ENCODE measurements at regions of chr1 and their contacts with region 1.

Region 1: DNA sequence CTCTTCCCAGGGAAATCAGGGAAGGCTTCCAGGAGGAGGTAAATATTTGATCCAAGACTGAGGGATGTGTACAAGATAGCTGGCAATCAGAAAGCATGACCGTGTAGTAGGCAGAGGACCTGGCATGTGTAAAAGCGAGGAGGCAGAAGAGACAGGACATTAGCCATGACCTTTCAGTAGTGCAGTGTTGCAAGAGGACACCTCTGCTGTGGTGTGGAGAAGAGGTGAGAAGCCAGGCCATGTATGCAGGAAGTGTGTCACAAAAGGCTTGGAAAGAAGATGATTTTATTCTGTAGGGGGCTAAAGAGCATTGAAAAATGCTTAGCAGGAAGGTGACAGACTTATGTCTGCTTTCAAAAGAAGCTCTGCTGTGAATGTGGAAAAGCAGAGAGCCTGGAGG is 381.0 kb downstream of the ZP4 start:
- DNase-seq: no peak
- H3K4me3 Mint-ChIP-seq: no peak overlapping the region
- H3K27ac Mint-ChIP-seq: no peak overlapping the region
- H3K4me1 Mint-ChIP-seq: peaks cover 3% of the 10 kb centered on the region
- H3K27me3 Mint-ChIP-seq: peaks cover 14% of the 10 kb centered on the region

Region 2: DNA sequence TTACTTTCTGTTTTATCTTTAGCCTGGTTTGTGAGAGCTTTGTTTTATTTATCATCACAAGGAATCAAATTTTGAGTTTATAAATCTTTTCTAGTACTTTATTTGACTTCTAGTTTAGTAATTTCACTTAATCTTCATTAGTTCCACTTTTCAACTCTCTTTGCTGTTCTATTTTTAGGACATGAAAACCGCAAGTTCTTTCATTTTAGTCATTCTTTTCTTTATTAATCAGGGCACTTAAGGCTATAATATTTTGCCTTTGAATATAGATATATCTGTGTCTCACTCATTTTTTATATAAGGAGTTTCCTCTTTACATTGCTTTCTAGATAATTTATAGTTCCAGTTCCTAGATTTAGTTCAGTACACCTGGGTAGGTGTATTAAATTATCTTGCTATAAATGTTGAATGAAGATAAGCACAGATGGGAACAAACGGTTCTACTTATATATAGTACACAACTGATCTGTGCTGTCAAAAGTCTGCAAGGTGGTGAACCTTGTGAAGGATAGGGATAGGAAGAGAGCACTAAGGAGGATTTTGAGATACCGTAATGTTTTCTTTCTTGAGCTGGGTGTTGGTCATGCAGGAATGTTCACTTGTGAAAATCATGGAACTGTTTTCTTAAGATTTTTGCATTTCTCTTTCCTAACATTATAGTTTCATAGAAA is 65.5 kb before region 1 on chr1:
- CTCF ChIA-PET with region 1: no interaction called
- intact Hi-C with region 1: loop called (anchors 10 kb)
- DNase-seq: no peak
- H3K4me3 Mint-ChIP-seq: no peak overlapping the region
- H3K27ac Mint-ChIP-seq: no peak overlapping the region
- H3K4me1 Mint-ChIP-seq: no peaks in the 10 kb centered on the region
- H3K27me3 Mint-ChIP-seq: no peaks in the 10 kb centered on the region